CD8-positive, alpha-beta T cell (primary cell): ENCODE measurements at regions of chr9 and their contacts with region 1.

Region 1: DNA sequence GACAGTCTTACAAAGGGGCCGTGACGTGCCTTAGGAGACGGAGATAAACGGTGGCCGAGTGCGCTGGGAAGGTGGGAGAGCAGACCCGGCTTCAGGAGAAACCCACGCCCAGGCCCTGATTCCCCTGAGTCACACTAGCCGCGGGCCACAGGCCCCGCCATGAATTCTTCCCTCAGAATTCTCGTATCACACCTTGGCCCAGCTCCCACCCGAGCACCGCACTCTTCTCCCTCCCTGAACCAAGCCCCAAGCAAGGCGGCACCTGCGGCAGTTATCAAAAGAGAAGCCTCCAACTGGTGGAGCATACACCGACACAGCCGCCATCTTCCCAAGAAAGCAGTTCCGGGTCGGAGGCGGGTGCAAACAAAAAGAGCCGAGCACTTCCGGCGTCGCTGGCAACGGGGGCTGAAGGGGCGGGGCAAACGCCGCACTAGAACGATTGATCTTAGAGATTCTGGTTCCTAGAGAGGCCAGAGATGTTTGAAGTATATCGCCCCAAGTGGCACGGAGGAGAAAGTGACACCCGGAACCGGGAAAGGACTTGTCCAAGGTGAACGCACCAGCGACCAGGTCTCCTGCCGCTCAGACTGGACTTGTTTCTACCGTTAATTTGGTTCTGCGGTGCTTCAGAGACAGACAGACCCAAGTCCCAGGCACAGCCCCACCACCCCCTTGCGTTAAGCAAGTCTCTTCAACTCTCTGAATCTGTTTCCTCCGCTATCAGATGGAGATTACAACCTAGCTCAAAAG is at the start of gene PSMB7:
- DNase-seq: peak; percentile 94 to 98 (median 98)
- ATAC-seq: peak; percentile 95
- H3K4me3 ChIP-seq: peak within 1 kb of the TSS; percentile 66 to 87
- H3K4me3 Mint-ChIP-seq: peak within 1 kb of the TSS; percentile 98
- H3K27ac ChIP-seq: peak within 1 kb of the TSS; percentile 61 to 74
- H3K27ac Mint-ChIP-seq: peak within 1 kb of the TSS; percentile 96
- H3K4me1 ChIP-seq: peaks cover 11% of the 10 kb centered on the region
- H3K4me1 Mint-ChIP-seq: peaks cover 39% of the 10 kb centered on the region
- H3K27me3 ChIP-seq: no peaks in the 10 kb centered on the region
- H3K27me3 Mint-ChIP-seq: no peaks in the 10 kb centered on the region
- CTCF ChIP-seq: peak; percentile 95
- total RNA-seq, gene PSMB7: 71.0 to 71.5 TPM

Region 2: DNA sequence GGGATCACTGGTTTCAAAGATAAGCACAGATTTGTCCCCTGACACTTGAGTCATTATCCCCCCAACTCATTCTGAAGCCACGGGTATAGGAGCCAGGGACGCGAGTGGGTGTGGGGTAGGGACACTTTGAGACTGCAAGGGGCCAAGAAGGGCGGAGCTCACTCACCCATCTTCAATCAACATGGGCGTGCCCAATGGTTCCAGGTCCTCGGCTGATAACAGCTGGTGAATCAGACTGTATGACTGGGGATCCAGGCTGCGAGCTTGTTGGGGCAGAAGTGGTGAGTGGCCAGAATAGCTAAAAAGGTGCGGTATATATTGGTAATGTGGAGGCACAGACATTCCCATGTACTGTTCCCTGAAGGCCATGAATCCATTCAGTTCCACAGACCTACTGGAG is 122.6 kb after region 1 on chr9:
- CTCF ChIA-PET with region 1: interaction called, 17 read pairs
- POLR2A ChIA-PET with region 1: no interaction called
- intact Hi-C with region 1: loop called (anchors 1 kb)
- DNase-seq: no peak
- ATAC-seq: no peak
- H3K4me3 ChIP-seq: no peak overlapping the region
- H3K4me3 Mint-ChIP-seq: no peak overlapping the region
- H3K27ac ChIP-seq: no peak overlapping the region
- H3K27ac Mint-ChIP-seq: no peak overlapping the region
- H3K4me1 ChIP-seq: no peaks in the 10 kb centered on the region
- H3K4me1 Mint-ChIP-seq: no peaks in the 10 kb centered on the region
- H3K27me3 ChIP-seq: no peaks in the 10 kb centered on the region
- H3K27me3 Mint-ChIP-seq: peaks cover 3% of the 10 kb centered on the region
- CTCF ChIP-seq: no peak

Region 3: GRCh38 chr9:124708633-124709291 is 293.5 kb after region 1 on chr9:
- CTCF ChIA-PET with region 1: no interaction called
- POLR2A ChIA-PET with region 1: no interaction called
- intact Hi-C with region 1: loop called (anchors 5 to 10 kb)
- DNase-seq: no peak
- ATAC-seq: no peak
- H3K4me3 ChIP-seq: no peak overlapping the region
- H3K4me3 Mint-ChIP-seq: no peak overlapping the region
- H3K27ac ChIP-seq: no peak overlapping the region
- H3K27ac Mint-ChIP-seq: no peak overlapping the region
- H3K4me1 ChIP-seq: no peaks in the 10 kb centered on the region
- H3K4me1 Mint-ChIP-seq: no peaks in the 10 kb centered on the region
- H3K27me3 ChIP-seq: no peaks in the 10 kb centered on the region
- H3K27me3 Mint-ChIP-seq: peaks cover 27% of the 10 kb centered on the region
- CTCF ChIP-seq: no peak

Region 4: DNA sequence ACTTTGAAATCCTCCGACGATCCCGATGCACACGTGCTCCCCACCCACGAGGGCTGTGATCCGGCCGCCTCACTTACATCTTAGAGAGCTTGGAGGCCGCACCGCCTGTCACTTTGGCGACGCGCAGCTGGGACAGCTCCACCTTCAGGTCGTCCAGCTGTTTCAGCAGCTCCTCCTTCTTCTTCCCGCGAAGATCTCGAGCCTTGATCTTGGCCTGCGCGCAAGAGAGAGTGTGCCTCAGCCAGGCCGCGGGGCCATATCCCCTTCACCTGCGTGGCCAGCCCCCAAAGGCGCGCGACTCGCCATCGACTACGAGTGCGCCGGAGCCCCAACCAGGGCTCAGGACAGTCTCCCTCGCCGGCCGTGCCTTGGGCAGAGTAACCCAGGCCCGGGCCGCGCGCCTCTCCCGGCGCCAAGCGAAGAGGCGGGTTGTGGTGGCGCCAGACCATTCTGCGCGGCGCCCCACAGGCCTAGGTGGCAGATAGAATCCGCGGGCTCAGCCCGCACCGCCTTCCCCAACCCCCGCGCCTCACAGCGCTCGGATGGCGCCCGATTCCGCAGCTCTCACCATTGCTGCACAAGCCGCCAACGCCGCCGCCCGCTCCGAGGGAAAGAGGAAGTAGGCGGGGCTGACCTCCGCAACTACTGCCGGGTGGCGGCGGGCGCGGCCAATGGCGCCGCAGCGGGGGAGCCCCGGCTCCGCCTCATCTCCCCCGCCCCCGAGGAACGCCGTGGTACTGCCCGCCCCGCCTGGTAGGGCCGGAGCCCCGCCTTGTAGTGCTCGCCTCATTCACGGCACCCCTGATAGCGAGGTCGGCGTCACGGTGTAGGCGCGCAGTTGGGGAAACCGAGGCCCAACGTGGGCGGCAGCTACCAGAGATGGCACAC is 446.3 kb after region 1 on chr9 and contains the starts of genes ARPC5L and RPL35:
- CTCF ChIA-PET with region 1: no interaction called
- POLR2A ChIA-PET with region 1: no interaction called
- intact Hi-C with region 1: loop called in 1 of 2 experiments (anchors 5 kb)
- DNase-seq: peak; percentile 90 to 97 (median 95)
- ATAC-seq: peak; percentile 95
- H3K4me3 ChIP-seq: peak within 1 kb of the TSS; percentile 67 to 90
- H3K4me3 Mint-ChIP-seq: peak within 1 kb of the TSS; percentile 97
- H3K27ac ChIP-seq: peak within 1 kb of the TSS; percentile 88 to 93
- H3K27ac Mint-ChIP-seq: peak within 1 kb of the TSS; percentile 98
- H3K4me1 ChIP-seq: peaks cover 16% of the 10 kb centered on the region
- H3K4me1 Mint-ChIP-seq: peaks cover 31% of the 10 kb centered on the region
- H3K27me3 ChIP-seq: no peaks in the 10 kb centered on the region
- H3K27me3 Mint-ChIP-seq: no peaks in the 10 kb centered on the region
- CTCF ChIP-seq: no peak
- total RNA-seq, gene ARPC5L: 43.2 to 45.5 TPM
- total RNA-seq, gene RPL35: 1,798 to 1,805 TPM

Region 5: GRCh38 chr9:125241000-125241862 is 826.0 kb after region 1 on chr9 and contains the start of gene HSPA5:
- CTCF ChIA-PET with region 1: no interaction called
- POLR2A ChIA-PET with region 1: no interaction called
- intact Hi-C with region 1: loop called in 1 of 2 experiments (anchors 10 kb)
- DNase-seq: peak; percentile 98 to 100 (median 99)
- ATAC-seq: peak; percentile 90
- H3K4me3 ChIP-seq: peak within 1 kb of the TSS; percentile 91 to 93
- H3K4me3 Mint-ChIP-seq: peak within 1 kb of the TSS; percentile 97
- H3K27ac ChIP-seq: peak within 1 kb of the TSS; percentile 97 to 99
- H3K27ac Mint-ChIP-seq: peak within 1 kb of the TSS; percentile 99
- H3K4me1 ChIP-seq: peaks cover 46% of the 10 kb centered on the region
- H3K4me1 Mint-ChIP-seq: peaks cover 46% of the 10 kb centered on the region
- H3K27me3 ChIP-seq: no peaks in the 10 kb centered on the region
- H3K27me3 Mint-ChIP-seq: no peaks in the 10 kb centered on the region
- CTCF ChIP-seq: no peak
- total RNA-seq, gene HSPA5: 354 to 372 TPM